CD8-positive, alpha-beta T cell (primary cell): ENCODE measurements at regions of chr18 and their contacts with region 1.

Region 1: DNA sequence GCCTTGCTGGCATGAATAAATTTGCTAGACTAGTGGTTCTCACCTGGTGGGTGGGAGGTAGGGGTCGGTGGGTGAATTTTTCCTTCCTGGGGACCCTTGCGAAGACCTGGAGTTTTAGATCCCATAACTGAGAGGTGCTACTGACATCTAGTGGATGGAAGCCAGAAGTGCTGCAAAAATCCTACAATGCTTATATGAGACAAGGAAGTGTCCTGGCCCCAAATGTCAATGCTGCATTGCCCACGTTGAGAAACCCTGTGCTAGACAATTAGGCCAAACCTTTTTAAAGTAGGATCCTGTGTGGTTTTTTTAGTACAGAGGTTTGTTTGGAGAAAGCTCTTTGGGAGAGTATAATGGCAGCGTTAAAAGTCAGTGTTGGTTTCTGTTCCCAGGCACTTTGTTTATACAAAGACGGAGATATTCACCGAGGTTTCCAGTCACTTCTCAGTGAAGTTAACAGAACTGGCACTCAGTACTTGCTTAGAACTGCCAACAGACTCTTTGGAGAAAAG is 9.6 kb downstream of the SERPINB8 start:
- DNase-seq: peak in 7 of 9 experiments; percentile 9 to 71 (median 43)
- ATAC-seq: peak; percentile 77
- H3K4me3 ChIP-seq: no peak overlapping the region
- H3K4me3 Mint-ChIP-seq: no peak overlapping the region
- H3K27ac ChIP-seq: no peak overlapping the region
- H3K27ac Mint-ChIP-seq: no peak overlapping the region
- H3K4me1 ChIP-seq: no peaks in the 10 kb centered on the region
- H3K4me1 Mint-ChIP-seq: peaks cover 16% of the 10 kb centered on the region
- H3K27me3 ChIP-seq: no peaks in the 10 kb centered on the region
- H3K27me3 Mint-ChIP-seq: no peaks in the 10 kb centered on the region
- CTCF ChIP-seq: peak; percentile 84

Region 2: GRCh38 chr18:63823518-63824219 is 155.8 kb before region 1 on chr18:
- CTCF ChIA-PET with region 1: no interaction called
- POLR2A ChIA-PET with region 1: no interaction called
- intact Hi-C with region 1: loop called in 1 of 2 experiments (anchors 5 kb)
- DNase-seq: peak in 2 of 9 experiments; percentile 26 to 36
- ATAC-seq: no peak
- H3K4me3 ChIP-seq: no peak overlapping the region
- H3K4me3 Mint-ChIP-seq: no peak overlapping the region
- H3K27ac ChIP-seq: no peak overlapping the region
- H3K27ac Mint-ChIP-seq: no peak overlapping the region
- H3K4me1 ChIP-seq: no peaks in the 10 kb centered on the region
- H3K4me1 Mint-ChIP-seq: no peaks in the 10 kb centered on the region
- H3K27me3 ChIP-seq: no peaks in the 10 kb centered on the region
- H3K27me3 Mint-ChIP-seq: peaks cover 17% of the 10 kb centered on the region
- CTCF ChIP-seq: no peak

Region 3: GRCh38 chr18:63890950-63891304 is 88.5 kb before region 1 on chr18:
- CTCF ChIA-PET with region 1: no interaction called
- POLR2A ChIA-PET with region 1: no interaction called
- intact Hi-C with region 1: loop called in 1 of 2 experiments (anchors 1 kb)
- DNase-seq: peak in 1 of 9 experiments; percentile 4
- ATAC-seq: no peak
- H3K4me3 ChIP-seq: no peak overlapping the region
- H3K4me3 Mint-ChIP-seq: no peak overlapping the region
- H3K27ac ChIP-seq: no peak overlapping the region
- H3K27ac Mint-ChIP-seq: no peak overlapping the region
- H3K4me1 ChIP-seq: no peaks in the 10 kb centered on the region
- H3K4me1 Mint-ChIP-seq: no peaks in the 10 kb centered on the region
- H3K27me3 ChIP-seq: no peaks in the 10 kb centered on the region
- H3K27me3 Mint-ChIP-seq: peaks cover 15% of the 10 kb centered on the region
- CTCF ChIP-seq: no peak

Region 4: GRCh38 chr18:63963615-63964256 is 15.7 kb before region 1 on chr18:
- CTCF ChIA-PET with region 1: interaction called, 107 read pairs
- POLR2A ChIA-PET with region 1: interaction called, 5 read pairs
- intact Hi-C with region 1: loop called (anchors 1 kb)
- DNase-seq: peak in 8 of 9 experiments; percentile 23 to 77 (median 51)
- ATAC-seq: peak; percentile 82
- H3K4me3 ChIP-seq: no peak overlapping the region
- H3K4me3 Mint-ChIP-seq: no peak overlapping the region
- H3K27ac ChIP-seq: no peak overlapping the region
- H3K27ac Mint-ChIP-seq: no peak overlapping the region
- H3K4me1 ChIP-seq: no peaks in the 10 kb centered on the region
- H3K4me1 Mint-ChIP-seq: peaks cover 2% of the 10 kb centered on the region
- H3K27me3 ChIP-seq: no peaks in the 10 kb centered on the region
- H3K27me3 Mint-ChIP-seq: peaks cover 21% of the 10 kb centered on the region
- CTCF ChIP-seq: peak; percentile 67

Region 5: GRCh38 chr18:63994783-63995399 is 15.4 kb after region 1 on chr18:
- CTCF ChIA-PET with region 1: interaction called, 16 read pairs
- POLR2A ChIA-PET with region 1: no interaction called
- intact Hi-C with region 1: no loop called
- DNase-seq: peak in 8 of 9 experiments; percentile 7 to 53 (median 40)
- ATAC-seq: peak; percentile 51
- H3K4me3 ChIP-seq: no peak overlapping the region
- H3K4me3 Mint-ChIP-seq: no peak overlapping the region
- H3K27ac ChIP-seq: no peak overlapping the region
- H3K27ac Mint-ChIP-seq: no peak overlapping the region
- H3K4me1 ChIP-seq: no peaks in the 10 kb centered on the region
- H3K4me1 Mint-ChIP-seq: no peaks in the 10 kb centered on the region
- H3K27me3 ChIP-seq: no peaks in the 10 kb centered on the region
- H3K27me3 Mint-ChIP-seq: peaks cover 2% of the 10 kb centered on the region
- CTCF ChIP-seq: peak; percentile 80